Ascending aorta (tissue), 2 donors: ENCODE measurements at regions of chr9 and their contacts with region 1.

Region 1: GRCh38 chr9:5510360-5510931 is at the start of gene PDCD1LG2:
- DNase-seq: no peak
- H3K4me3 ChIP-seq: peak within 1 kb of the TSS; percentile 29 to 54
- H3K27ac ChIP-seq: peak within 1 kb of the TSS; percentile 76 to 79
- H3K4me1 ChIP-seq: peaks cover 0 to 4% of the 10 kb centered on the region in 2 donors
- H3K27me3 ChIP-seq: no peaks in the 10 kb centered on the region
- CTCF ChIP-seq: no peak
- total RNA-seq, gene PDCD1LG2: 1.1 TPM

Region 2: DNA sequence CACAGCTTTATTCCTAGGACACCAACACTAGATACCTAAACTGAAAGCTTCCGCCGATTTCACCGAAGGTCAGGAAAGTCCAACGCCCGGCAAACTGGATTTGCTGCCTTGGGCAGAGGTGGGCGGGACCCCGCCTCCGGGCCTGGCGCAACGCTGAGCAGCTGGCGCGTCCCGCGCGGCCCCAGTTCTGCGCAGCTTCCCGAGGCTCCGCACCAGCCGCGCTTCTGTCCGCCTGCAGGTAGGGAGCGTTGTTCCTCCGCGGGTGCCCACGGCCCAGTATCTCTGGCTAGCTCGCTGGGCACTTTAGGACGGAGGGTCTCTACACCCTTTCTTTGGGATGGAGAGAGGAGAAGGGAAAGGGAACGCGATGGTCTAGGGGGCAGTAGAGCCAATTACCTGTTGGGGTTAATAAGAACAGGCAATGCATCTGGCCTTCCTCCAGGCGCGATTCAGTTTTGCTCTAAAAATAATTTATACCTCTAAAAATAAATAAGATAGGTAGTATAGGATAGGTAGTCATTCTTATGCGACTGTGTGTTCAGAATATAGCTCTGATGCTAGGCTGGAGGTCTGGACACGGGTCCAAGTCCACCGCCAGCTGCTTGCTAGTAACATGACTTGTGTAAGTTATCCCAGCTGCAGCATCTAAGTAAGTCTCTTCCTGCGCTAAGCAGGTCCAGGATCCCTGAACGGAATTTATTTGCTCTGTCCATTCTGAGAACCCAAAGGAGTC is 59.9 kb before region 1 on chr9 and contains the start of gene CD274:
- intact Hi-C with region 1: loop called (anchors 5 kb)
- DNase-seq: peak; percentile 56 to 94
- H3K4me3 ChIP-seq: peak within 1 kb of the TSS; percentile 60 to 72
- H3K27ac ChIP-seq: peak within 1 kb of the TSS; percentile 79 to 80
- H3K4me1 ChIP-seq: peaks cover 3 to 30% of the 10 kb centered on the region in 2 donors
- H3K27me3 ChIP-seq: no peaks in the 10 kb centered on the region
- CTCF ChIP-seq: peak; percentile 67 to 85 (median 80)
- total RNA-seq, gene CD274: 23.8 TPM

Region 3: DNA sequence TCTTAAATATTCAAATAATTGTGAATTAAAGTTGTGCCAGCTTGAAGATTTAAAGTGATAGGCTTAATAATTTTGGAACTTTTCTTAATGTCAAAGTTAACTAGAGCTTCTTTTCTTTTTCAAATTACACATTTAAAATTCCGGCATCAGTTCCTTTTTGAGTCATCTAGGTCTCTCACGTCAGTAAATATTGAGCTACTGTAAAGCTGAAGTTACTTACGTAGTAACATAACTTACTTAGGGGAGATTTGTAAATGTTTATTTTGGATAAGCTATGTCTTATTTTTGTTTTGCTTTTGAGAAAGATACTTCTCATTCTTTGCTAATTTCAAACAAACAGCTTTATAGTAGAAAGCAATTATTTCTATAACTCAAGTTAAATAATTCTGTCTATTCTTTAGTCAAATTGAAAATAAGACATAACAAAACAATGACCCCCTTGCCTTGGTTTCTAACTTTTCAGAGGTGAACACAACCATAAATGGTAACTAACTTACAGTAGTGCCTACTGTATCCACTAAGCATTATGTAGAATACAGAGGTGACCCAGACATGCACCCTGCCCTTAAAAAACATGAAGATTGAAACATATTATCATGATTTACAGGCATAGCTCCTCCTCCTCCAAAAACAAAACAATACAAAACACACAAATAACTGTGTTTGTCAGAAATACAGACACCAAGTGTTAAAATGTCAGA is 30.3 kb before region 1 on chr9:
- intact Hi-C with region 1: no loop called
- DNase-seq: no peak
- H3K4me3 ChIP-seq: no peak overlapping the region
- H3K27ac ChIP-seq: no peak overlapping the region
- H3K4me1 ChIP-seq: no peaks in the 10 kb centered on the region
- H3K27me3 ChIP-seq: no peaks in the 10 kb centered on the region
- CTCF ChIP-seq: no peak

Region 4: DNA sequence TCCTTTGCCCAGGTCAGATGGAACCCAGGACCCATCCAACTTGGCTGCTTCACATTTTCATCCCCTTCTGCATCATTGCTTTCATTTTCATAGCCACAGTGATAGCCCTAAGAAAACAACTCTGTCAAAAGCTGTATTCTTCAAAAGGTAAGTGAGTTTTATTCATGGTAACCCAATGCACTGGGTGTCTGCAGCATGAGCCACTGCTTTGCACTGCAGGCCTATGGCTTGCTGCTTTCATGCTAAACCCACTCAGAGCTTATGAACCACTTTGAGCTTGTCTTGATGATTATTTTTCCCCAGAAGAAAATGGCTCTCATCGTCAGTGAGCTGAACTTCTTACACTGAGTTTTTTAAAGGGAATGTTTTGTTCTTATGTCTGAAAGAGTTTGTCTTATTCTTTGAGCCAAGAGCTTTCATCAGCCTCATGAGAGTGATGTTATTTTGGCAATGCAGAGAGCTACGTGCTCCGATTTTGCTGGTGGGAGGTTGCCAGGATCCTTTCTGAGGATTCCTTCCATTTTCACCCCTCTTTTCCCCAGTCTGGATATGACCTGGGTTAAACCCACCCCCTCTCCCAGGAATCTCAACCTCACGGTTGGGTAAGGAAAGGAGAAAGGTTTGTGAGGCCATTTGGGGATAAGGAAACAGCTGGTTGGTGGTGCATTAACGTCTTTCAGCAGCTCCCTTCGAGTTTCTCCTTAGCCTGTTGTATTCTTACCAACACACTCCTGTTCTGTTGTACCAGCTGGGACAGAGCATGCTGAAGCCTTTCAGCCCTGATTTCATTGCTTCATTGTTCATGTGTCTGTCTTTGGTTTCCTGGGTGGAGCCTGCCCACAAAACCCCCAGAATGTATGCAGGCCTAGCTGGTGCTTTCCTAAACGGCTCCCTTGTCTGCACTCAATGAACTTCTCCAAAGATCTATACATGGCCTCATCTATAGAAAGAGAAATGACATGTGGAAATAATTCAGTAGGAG is 47.5 kb after region 1 on chr9:
- intact Hi-C with region 1: loop called (anchors 5 kb)
- DNase-seq: no peak
- H3K4me3 ChIP-seq: peak overlapping the region in 1 of 2 donors; percentile 24
- H3K27ac ChIP-seq: peak overlapping the region; percentile 80
- H3K4me1 ChIP-seq: peaks cover 8 to 42% of the 10 kb centered on the region in 2 donors
- H3K27me3 ChIP-seq: no peaks in the 10 kb centered on the region
- CTCF ChIP-seq: no peak

Region 5: GRCh38 chr9:5575000-5575399 is 64.6 kb after region 1 on chr9:
- intact Hi-C with region 1: loop called (anchors 5 kb)
- DNase-seq: no peak
- H3K4me3 ChIP-seq: no peak overlapping the region
- H3K27ac ChIP-seq: no peak overlapping the region
- H3K4me1 ChIP-seq: no peaks in the 10 kb centered on the region
- H3K27me3 ChIP-seq: no peaks in the 10 kb centered on the region
- CTCF ChIP-seq: no peak

Region 6: GRCh38 chr9:5869315-5870019 is 359.0 kb after region 1 on chr9:
- intact Hi-C with region 1: no loop called
- DNase-seq: no peak
- H3K4me3 ChIP-seq: no peak overlapping the region
- H3K27ac ChIP-seq: no peak overlapping the region
- H3K4me1 ChIP-seq: no peaks in the 10 kb centered on the region
- H3K27me3 ChIP-seq: no peaks in the 10 kb centered on the region
- CTCF ChIP-seq: no peak